Activated CD4-positive, alpha-beta T cell treated with anti-CD3 and anti-CD28 coated beads, Interleukin-2, amount 10 ng/mL, durations not matched to agents 24 days and 14 days (primary cell): ENCODE measurements at regions of chr11 and their contacts with region 1.

Region 1: GRCh38 chr11:16738193-16738946 is at the start of gene C11orf58:
- DNase-seq: peak; percentile 98
- H3K4me3 Mint-ChIP-seq: no peak within 1 kb of the TSS
- H3K27ac Mint-ChIP-seq: peak within 1 kb of the TSS; percentile 77
- H3K4me1 Mint-ChIP-seq: peaks cover 16% of the 10 kb centered on the region
- H3K27me3 Mint-ChIP-seq: peaks cover 4% of the 10 kb centered on the region
- total RNA-seq, gene C11orf58: 142 and 149 TPM in 2 replicates

Region 2: GRCh38 chr11:16749666-16750065 is 11.3 kb after region 1 on chr11:
- intact Hi-C with region 1: loop called (anchors 1 kb)
- DNase-seq: no peak
- H3K4me3 Mint-ChIP-seq: no peak overlapping the region
- H3K27ac Mint-ChIP-seq: peak overlapping the region; percentile 84
- H3K4me1 Mint-ChIP-seq: peaks cover 21% of the 10 kb centered on the region
- H3K27me3 Mint-ChIP-seq: no peaks in the 10 kb centered on the region